SK-N-SH (cell line): ENCODE measurements at regions of chr21 and their contacts with region 1.

Region 1: GRCh38 chr21:25607151-25608043 is at the start of gene MRPL39:
- DNase-seq: peak; percentile 94
- H3K4me3 ChIP-seq: peak within 1 kb of the TSS; percentile 94
- H3K27ac ChIP-seq: peak within 1 kb of the TSS; percentile 80 to 88
- H3K4me1 ChIP-seq: peaks cover 9% of the 10 kb centered on the region in 2 experiments; a peak in 3 of 4 replicates
- H3K27me3 ChIP-seq: no peaks in the 10 kb centered on the region
- CTCF ChIP-seq: peak; percentile 67
- EP300 ChIP-seq: no peak
- RAD21 ChIP-seq: peak; percentile 48
- polyA plus RNA-seq, gene MRPL39: 21.1 and 26.9 TPM in 2 replicates

Region 2: DNA sequence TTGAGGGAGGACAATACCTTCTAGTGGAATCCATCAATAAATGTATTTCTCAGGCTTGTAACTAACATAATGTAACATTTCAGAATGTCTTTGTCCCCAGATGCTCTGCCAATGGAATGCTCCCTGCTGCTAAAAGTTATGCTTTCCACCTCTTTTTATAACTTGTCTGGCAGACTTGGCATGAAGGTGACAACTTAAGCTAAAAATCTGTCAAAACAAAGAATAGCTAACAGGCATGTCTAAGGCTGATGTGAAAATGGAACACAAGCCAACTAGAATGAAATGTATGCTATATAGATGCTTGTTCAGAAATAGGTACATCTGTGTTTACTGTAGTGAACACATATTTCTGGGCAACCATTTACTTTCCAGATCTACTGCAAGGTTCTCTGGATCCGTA is 468.0 kb before region 1 on chr21:
- CTCF ChIA-PET with region 1: no interaction called
- POLR2A ChIA-PET with region 1: no interaction called
- DNase-seq: no peak
- H3K4me3 ChIP-seq: no peak overlapping the region
- H3K27ac ChIP-seq: no peak overlapping the region
- H3K4me1 ChIP-seq: no peaks in the 10 kb centered on the region
- H3K27me3 ChIP-seq: no peaks in the 10 kb centered on the region
- CTCF ChIP-seq: no peak
- EP300 ChIP-seq: no peak
- RAD21 ChIP-seq: no peak

Region 3: DNA sequence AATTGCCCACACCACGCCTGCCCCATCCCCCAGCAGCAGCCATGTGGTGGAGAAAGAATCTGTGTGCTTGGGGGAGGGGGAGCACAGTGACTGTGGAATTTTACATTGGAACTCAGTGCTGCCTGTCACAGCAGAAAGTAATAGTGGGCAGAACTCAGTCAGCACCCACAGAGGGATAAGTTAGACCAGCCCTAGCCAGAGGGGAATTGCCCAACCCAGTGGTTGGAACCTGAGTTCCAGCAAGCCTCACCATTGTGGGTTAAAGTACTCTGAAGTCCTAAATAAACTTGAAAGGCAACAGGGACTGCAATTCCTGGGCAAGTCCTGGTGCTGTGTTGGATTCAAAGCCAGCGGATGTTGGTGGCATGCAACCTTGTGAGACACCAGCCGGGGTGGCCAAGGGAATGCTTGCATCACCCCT is 88.9 kb before region 1 on chr21:
- CTCF ChIA-PET with region 1: no interaction called
- POLR2A ChIA-PET with region 1: no interaction called
- DNase-seq: no peak
- H3K4me3 ChIP-seq: no peak overlapping the region
- H3K27ac ChIP-seq: no peak overlapping the region
- H3K4me1 ChIP-seq: no peaks in the 10 kb centered on the region; a peak in 1 of 4 replicates
- H3K27me3 ChIP-seq: no peaks in the 10 kb centered on the region
- CTCF ChIP-seq: no peak
- EP300 ChIP-seq: no peak
- RAD21 ChIP-seq: no peak

Region 4: GRCh38 chr21:25639551-25640201 is 32.3 kb after region 1 on chr21:
- CTCF ChIA-PET with region 1: interaction called, 40 read pairs
- POLR2A ChIA-PET with region 1: no interaction called
- DNase-seq: peak; percentile 88
- H3K4me3 ChIP-seq: peak overlapping the region; percentile 81 to 85
- H3K27ac ChIP-seq: peak overlapping the region; percentile 48 to 64; a peak in 3 of 4 replicates
- H3K4me1 ChIP-seq: peaks cover 6 to 7% of the 10 kb centered on the region in 2 experiments; a peak in 2 of 4 replicates
- H3K27me3 ChIP-seq: no peaks in the 10 kb centered on the region
- CTCF ChIP-seq: peak; percentile 50
- EP300 ChIP-seq: no peak
- RAD21 ChIP-seq: peak; percentile 39

Region 5: GRCh38 chr21:25688275-25689155 is 81.1 kb after region 1 on chr21:
- CTCF ChIA-PET with region 1: interaction called, 20 read pairs
- POLR2A ChIA-PET with region 1: no interaction called
- DNase-seq: no peak
- H3K4me3 ChIP-seq: no peak overlapping the region
- H3K27ac ChIP-seq: no peak overlapping the region; a peak in 1 of 4 replicates
- H3K4me1 ChIP-seq: peaks cover 0 to 2% of the 10 kb centered on the region in 2 experiments; a peak in 1 of 4 replicates
- H3K27me3 ChIP-seq: no peaks in the 10 kb centered on the region
- CTCF ChIP-seq: no peak
- EP300 ChIP-seq: no peak
- RAD21 ChIP-seq: no peak

Region 6: GRCh38 chr21:25708467-25709065 is 101.2 kb after region 1 on chr21:
- CTCF ChIA-PET with region 1: interaction called, 75 read pairs
- POLR2A ChIA-PET with region 1: no interaction called
- DNase-seq: peak; percentile 47
- H3K4me3 ChIP-seq: no peak overlapping the region
- H3K27ac ChIP-seq: no peak overlapping the region
- H3K4me1 ChIP-seq: no peaks in the 10 kb centered on the region
- H3K27me3 ChIP-seq: no peaks in the 10 kb centered on the region
- CTCF ChIP-seq: peak; percentile 93
- EP300 ChIP-seq: no peak
- RAD21 ChIP-seq: peak; percentile 76

Region 7: DNA sequence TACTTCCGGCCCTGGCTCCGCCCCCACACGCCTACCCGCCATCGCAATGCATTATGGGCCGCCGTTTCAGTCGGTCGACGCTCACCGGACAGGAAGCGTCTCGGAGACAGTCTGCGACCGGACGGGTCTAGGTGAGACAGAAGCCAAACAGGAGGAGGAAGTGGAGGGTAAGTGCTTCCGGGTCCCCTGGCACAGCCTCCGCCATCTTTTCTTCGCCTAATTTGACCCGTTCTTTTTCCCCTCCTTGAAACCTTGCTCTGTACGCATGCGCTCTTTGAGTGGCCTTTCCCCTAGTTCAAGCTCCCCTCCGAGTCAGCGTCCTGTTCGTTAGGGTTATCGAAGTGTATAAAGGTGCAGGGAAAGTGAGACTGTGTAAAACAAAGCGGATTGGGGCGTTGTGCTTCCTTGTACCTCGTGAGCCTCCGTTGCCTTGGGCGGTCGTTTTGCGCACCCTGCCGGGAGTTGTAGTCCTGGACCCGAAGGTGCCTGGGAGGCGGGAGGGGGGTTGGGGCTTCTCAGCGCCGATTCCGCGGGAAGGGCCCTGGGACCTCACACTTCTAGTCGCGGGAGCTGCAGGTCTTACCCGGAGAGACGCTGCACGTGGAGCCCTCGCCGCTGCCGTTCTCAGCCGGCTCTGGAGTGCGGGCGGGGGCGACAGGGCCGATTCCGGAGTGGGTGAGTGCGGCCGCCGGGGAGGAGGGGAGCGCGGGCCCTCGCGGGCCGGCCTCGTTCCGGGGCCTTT is 127.7 kb after region 1 on chr21 and contains the starts of genes ATP5PF and GABPA:
- CTCF ChIA-PET with region 1: interaction called, 16 read pairs
- POLR2A ChIA-PET with region 1: no interaction called
- DNase-seq: peak; percentile 91
- H3K4me3 ChIP-seq: peak within 1 kb of the TSS; percentile 83 to 94
- H3K27ac ChIP-seq: peak within 1 kb of the TSS; percentile 97 to 99
- H3K4me1 ChIP-seq: peaks cover 13 to 24% of the 10 kb centered on the region in 2 experiments; a peak in 3 of 4 replicates
- H3K27me3 ChIP-seq: no peaks in the 10 kb centered on the region
- CTCF ChIP-seq: no peak
- EP300 ChIP-seq: no peak; a peak in 2 of 4 replicates
- RAD21 ChIP-seq: no peak
- polyA plus RNA-seq, gene ATP5PF: 277 and 307 TPM in 2 replicates
- polyA plus RNA-seq, gene GABPA: 6.2 and 7.9 TPM in 2 replicates